ENCODE measurements at regions of chr1 and their contacts with region 1.

Region 1: DNA sequence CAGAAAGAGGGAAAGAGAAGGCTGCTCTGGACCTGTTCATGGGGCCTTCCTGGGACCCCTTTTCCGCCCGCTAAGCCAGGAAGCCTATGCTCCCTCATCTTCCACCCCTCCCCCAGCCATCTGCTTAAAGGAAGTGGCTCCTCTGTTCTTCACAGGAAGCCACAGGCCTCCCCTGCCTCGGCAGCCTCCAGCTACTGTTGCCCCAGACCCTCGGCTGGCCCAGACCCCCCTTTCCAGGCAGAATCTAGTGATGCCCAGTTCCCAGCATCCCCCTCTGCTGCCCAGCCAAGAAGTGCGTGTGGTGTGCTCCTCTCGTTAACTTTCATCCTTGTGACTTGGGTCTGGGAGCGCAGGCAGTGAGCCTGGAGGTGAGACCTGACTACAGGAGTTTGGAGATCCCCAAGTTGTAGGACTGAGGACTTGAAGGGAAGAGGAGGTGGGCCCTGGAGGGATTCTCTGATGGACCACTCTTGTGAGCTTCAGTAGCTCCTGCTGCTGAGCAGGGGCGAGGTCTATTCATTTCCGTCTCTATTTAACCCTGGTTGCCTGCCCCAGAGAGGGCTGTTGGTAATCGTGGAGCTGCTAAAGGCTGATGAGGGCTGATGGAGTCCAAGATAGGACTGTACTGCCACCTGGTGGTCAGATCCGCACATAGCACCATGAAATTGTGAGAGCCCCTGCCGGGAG is 9.1 kb downstream of the IFI6 start:
- DNase-seq: peak; percentile 97
- H3K4me3 Mint-ChIP-seq: peak overlapping the region; percentile 80
- H3K27ac Mint-ChIP-seq: peak overlapping the region; percentile 99
- H3K4me1 Mint-ChIP-seq: peaks cover 55% of the 10 kb centered on the region
- H3K27me3 Mint-ChIP-seq: no peaks in the 10 kb centered on the region

Region 2: DNA sequence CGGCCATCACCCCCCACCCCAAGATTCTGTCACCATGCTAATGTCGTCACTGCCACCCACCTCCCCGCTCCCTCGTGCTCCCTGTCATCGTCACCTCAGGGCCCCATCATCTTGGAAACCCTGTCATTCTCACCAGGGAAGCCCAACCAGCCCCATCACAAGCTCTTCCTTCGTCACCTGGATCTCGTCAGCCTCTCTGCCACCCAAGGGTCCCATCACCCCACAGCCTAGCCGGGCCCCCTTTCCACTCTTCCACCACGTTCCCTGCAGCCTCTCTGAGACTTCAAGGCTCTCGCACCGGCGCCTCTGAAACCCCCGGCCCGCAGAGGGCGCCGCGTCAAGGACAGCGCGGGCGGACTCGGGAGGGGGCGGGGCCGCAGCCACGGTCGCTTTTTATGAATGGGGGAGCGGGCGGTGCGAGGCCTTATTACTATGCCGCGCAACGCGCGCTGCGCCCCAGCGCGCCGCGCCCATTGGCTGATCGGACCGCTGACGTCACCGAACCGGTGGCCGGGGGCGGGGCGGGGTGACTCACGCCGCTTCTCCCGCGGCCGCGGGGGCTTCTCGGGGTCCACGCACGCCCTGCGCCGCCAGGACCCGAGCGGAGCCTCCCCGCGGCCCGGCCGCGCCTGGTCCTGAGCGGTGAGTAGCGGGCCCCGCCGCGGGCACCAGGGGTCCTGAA is 270.6 kb before region 1 on chr1 and contains the start of gene GPR3:
- intact Hi-C with region 1: loop called (anchors 1 kb)
- DNase-seq: peak; percentile 98
- H3K4me3 Mint-ChIP-seq: peak within 1 kb of the TSS; percentile 87
- H3K27ac Mint-ChIP-seq: peak within 1 kb of the TSS; percentile 93
- H3K4me1 Mint-ChIP-seq: peaks cover 13% of the 10 kb centered on the region
- H3K27me3 Mint-ChIP-seq: peaks cover 12% of the 10 kb centered on the region
- total RNA-seq, gene GPR3: 3.3 TPM in 2 replicates

Region 3: GRCh38 chr1:27522432-27523351 is 140.2 kb before region 1 on chr1:
- intact Hi-C with region 1: loop called (anchors 2 kb)
- DNase-seq: peak; percentile 91
- H3K4me3 Mint-ChIP-seq: peak overlapping the region; percentile 84
- H3K27ac Mint-ChIP-seq: peak overlapping the region; percentile 96
- H3K4me1 Mint-ChIP-seq: peaks cover 66% of the 10 kb centered on the region
- H3K27me3 Mint-ChIP-seq: no peaks in the 10 kb centered on the region

Region 4: DNA sequence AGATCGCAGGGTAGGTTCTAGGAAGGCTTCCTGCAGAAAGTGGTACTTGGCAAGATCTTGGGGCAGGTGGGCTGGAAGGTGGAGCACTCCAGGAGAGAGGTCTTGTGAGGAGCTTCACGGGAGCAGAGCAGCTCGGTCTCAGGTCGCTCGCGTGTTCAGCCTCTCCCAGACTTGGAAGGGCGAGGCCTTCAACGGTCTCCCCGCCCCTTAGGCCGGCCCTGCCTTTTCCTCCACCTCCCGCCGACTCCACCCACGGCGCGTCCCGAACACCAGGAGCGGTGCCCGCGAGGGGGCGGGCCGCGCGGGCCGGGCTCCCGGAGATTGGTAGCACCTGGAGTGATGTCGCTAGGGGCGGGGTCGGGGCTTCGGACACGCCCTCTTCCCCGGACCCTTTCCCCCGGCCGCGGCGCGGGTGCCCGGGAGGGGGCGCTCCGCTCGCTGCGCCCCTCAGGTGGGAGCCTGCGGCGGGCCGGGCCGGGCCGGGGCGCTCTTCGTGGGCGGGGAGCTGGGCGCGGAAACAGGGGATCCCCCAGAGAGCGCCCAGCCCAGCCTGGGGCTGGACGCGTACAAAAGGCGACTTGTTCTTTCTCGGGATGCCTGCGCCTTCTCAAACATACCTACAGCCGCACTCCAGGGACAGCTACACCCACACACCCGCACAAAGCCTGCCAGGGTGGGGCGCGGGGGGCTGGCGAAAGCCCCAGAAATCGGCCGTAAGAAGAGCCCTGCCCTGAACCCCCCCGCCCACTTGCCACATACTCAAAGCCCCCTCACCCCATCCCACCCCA is 94.4 kb before region 1 on chr1:
- intact Hi-C with region 1: loop called (anchors 1 kb)
- DNase-seq: peak; percentile 99
- H3K4me3 Mint-ChIP-seq: peak overlapping the region; percentile 76
- H3K27ac Mint-ChIP-seq: peak overlapping the region; percentile 43
- H3K4me1 Mint-ChIP-seq: peaks cover 25% of the 10 kb centered on the region
- H3K27me3 Mint-ChIP-seq: no peaks in the 10 kb centered on the region

Region 5: DNA sequence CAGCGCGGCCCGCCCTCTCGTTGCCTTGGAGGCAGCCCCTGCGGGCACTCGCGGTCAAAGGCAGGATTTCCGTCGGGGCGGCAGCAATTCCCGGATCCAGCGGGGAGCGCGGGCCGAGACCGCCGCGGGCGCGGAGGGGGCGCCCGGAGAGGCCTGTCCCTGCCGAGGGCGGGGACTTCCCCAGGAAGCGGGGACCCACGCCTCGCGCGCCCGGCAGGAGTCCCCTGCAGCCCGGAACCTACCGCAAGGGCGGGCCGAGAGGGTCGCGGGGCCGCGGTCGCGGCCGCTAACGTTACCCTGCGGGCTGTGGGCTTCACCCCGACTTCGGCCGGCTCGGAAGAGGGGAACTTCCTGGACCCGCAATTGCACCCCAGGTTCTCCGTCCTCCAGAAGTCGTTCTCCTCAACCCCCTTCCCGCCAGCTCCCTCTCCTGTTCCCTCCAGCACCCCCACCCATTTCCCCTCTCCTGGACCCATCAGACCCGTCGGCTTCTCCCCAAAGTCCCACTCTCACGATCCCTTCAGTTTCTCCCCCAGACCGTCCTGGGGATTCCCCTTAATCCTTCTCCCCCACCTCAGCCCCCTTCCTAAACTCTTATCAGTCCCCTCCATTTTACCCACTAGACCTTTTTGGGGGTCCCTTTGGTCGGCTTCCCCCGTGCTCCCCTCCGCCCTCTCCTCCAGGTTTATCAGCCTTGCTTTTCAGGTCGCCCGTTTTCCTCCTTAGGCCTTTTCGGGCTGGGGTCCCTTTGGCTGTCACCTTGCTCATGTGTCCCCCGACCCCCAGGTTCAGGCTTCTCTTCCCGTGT is 28.5 kb before region 1 on chr1:
- intact Hi-C with region 1: loop called (anchors 1 kb)
- DNase-seq: peak; percentile 89
- H3K4me3 Mint-ChIP-seq: peak overlapping the region; percentile 72
- H3K27ac Mint-ChIP-seq: peak overlapping the region; percentile 84
- H3K4me1 Mint-ChIP-seq: peaks cover 65% of the 10 kb centered on the region
- H3K27me3 Mint-ChIP-seq: no peaks in the 10 kb centered on the region

Region 6: DNA sequence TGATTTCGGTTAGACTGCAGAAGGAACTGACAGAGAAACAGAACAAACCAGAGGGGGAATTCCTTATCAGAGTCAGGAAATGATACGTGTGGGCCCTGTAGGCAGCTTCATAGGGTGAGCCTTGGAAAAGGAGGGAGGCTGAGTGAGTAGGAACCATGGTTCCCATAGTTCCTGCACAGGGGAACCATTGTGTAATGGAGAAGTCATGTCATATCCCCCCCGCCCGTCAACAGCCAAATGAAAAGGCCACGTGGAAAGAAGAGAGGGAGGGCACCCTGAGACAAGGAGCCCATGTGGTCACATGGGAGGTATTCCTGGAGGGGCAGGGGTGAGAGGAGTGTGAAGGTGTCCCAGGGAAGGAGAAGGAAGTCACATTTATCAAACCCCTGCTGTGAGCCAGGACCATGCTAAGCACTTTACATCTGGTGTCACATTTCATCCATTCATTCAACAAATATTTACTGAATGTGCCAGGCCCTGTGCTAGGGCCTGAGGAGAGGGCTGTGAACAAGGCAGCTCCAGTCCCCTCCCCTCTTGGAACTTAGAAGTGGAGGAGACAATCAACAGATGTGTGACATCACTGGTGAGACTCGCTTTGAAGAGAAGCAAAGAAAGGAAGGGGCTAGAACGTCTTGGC is 12.2 kb before region 1 on chr1:
- intact Hi-C with region 1: loop called (anchors 1 kb)
- DNase-seq: peak; percentile 63
- H3K4me3 Mint-ChIP-seq: no peak overlapping the region
- H3K27ac Mint-ChIP-seq: peak overlapping the region; percentile 90
- H3K4me1 Mint-ChIP-seq: peaks cover 36% of the 10 kb centered on the region
- H3K27me3 Mint-ChIP-seq: no peaks in the 10 kb centered on the region

Region 7: DNA sequence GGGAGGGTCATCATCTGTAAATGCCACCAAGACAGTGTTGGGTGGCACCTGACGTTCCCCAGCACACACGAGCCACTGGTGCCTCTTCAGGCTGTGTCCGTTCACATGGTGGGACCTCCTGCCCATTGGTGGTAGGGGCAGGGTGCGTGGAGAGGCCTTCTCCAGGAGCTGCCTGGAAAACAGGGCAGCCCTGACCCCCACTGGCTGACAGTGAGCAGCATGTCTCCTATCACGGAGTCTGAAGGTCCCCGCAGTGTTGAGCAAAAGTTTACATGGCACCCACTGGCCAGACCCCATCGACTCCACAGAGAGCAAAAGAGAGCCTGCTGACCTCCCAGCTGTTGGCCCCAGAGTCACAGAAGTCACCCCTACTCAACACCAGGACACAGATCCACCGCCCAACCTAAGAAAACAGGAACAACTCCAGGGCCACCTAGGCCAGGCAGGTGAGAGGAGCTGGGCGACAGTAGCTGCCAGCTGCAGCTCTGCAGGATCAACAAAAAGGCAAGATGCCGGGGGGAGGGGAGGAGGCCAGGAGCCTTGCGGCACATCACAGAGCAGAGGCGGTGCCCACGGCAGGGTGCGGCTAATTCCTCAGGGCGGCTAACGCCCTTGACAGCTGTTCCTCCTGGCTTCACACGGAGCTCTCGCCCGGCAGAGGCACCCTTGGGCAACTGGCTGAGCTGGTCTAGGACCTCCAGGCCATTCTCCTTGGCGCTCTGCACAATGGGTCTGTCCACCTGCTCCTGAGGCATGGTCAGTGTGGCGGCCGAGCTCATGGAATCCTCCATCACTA is 23.6 kb after region 1 on chr1:
- intact Hi-C with region 1: no loop called
- DNase-seq: no peak
- H3K4me3 Mint-ChIP-seq: no peak overlapping the region
- H3K27ac Mint-ChIP-seq: no peak overlapping the region
- H3K4me1 Mint-ChIP-seq: peaks cover 13% of the 10 kb centered on the region
- H3K27me3 Mint-ChIP-seq: peaks cover 5% of the 10 kb centered on the region

Measured in activated CD4-positive, alpha-beta T cell treated with anti-CD3 and anti-CD28 coated beads, Interleukin-2, amount 10 ng/mL, durations not matched to agents 24 days and 14 days (primary cell).